CD8-positive, alpha-beta T cell (primary cell): ENCODE measurements at regions of chr13 and their contacts with region 1.

Region 1: DNA sequence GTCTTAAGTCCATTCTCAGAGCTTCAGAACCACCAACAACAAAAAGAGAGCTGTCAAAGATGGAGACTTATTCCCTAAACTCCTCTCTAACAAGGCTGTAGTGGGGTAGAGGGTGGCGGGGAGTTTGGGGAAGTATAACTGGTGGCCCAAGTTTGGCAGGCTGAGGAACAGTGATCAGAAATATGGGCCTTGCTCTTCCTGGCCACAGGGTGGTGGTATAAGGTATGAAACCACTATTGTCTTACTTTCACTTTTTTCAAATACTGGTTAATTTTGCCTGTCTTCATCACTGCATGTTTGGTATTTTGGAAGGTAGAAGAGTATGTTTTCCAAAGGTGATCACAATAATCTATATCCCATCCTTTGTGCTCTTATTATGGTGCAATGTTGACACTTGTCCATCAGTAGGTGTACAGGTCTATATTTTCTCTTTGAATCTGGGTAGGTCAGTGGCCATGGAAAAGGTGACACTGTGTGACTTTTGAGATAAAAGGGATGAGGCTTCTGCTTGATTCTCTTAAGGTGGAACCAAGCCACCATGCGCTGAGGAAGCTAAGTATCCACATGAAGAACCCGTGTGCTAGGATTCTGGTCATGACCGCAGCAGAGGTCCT is 23.2 kb upstream of the GPC5 start:
- DNase-seq: peak in 2 of 9 experiments; percentile 30 to 47
- ATAC-seq: peak; percentile 55
- H3K4me3 ChIP-seq: no peak overlapping the region
- H3K4me3 Mint-ChIP-seq: no peak overlapping the region
- H3K27ac ChIP-seq: no peak overlapping the region
- H3K27ac Mint-ChIP-seq: no peak overlapping the region
- H3K4me1 ChIP-seq: no peaks in the 10 kb centered on the region
- H3K4me1 Mint-ChIP-seq: peaks cover 3% of the 10 kb centered on the region
- H3K27me3 ChIP-seq: no peaks in the 10 kb centered on the region
- H3K27me3 Mint-ChIP-seq: peaks cover 15% of the 10 kb centered on the region
- CTCF ChIP-seq: peak; percentile 36

Region 2: GRCh38 chr13:91347202-91347995 is 27.8 kb before region 1 on chr13 and contains the start of gene MIR17HG:
- CTCF ChIA-PET with region 1: no interaction called
- POLR2A ChIA-PET with region 1: no interaction called
- intact Hi-C with region 1: no loop called
- DNase-seq: peak; percentile 62 to 92 (median 84)
- ATAC-seq: peak; percentile 46
- H3K4me3 ChIP-seq: peak within 1 kb of the TSS; percentile 69 to 86
- H3K4me3 Mint-ChIP-seq: peak within 1 kb of the TSS; percentile 95
- H3K27ac ChIP-seq: peak within 1 kb of the TSS; percentile 60 to 77
- H3K27ac Mint-ChIP-seq: peak within 1 kb of the TSS; percentile 93
- H3K4me1 ChIP-seq: peaks cover 27% of the 10 kb centered on the region
- H3K4me1 Mint-ChIP-seq: peaks cover 41% of the 10 kb centered on the region
- H3K27me3 ChIP-seq: no peaks in the 10 kb centered on the region
- H3K27me3 Mint-ChIP-seq: no peaks in the 10 kb centered on the region
- CTCF ChIP-seq: no peak
- total RNA-seq, gene MIR17HG: 6.4 TPM

Region 3: DNA sequence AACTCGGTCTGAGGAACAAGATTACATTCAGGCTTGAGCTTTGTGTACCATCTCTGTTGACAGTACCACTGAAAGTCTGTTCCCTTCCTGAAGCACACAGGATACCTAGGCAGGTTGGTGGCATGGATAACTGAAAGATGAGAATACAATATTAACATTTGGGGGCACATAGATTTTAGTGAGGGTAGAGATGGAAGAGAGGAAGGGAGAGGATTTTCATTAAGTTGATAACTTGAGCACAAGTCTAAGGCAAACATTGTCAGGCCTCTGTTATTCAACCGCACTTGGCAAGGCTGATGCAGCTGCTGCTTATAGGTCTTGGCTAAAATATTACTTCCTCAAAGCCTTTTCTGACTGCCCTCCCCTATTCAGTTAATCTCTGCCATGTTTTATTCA is 16.8 kb before region 1 on chr13:
- CTCF ChIA-PET with region 1: no interaction called
- POLR2A ChIA-PET with region 1: no interaction called
- intact Hi-C with region 1: loop called in 1 of 2 experiments (anchors 1 kb)
- DNase-seq: no peak
- ATAC-seq: no peak
- H3K4me3 ChIP-seq: no peak overlapping the region
- H3K4me3 Mint-ChIP-seq: no peak overlapping the region
- H3K27ac ChIP-seq: no peak overlapping the region
- H3K27ac Mint-ChIP-seq: peak overlapping the region; percentile 28
- H3K4me1 ChIP-seq: no peaks in the 10 kb centered on the region
- H3K4me1 Mint-ChIP-seq: peaks cover 16% of the 10 kb centered on the region
- H3K27me3 ChIP-seq: no peaks in the 10 kb centered on the region
- H3K27me3 Mint-ChIP-seq: no peaks in the 10 kb centered on the region
- CTCF ChIP-seq: no peak

Region 4: DNA sequence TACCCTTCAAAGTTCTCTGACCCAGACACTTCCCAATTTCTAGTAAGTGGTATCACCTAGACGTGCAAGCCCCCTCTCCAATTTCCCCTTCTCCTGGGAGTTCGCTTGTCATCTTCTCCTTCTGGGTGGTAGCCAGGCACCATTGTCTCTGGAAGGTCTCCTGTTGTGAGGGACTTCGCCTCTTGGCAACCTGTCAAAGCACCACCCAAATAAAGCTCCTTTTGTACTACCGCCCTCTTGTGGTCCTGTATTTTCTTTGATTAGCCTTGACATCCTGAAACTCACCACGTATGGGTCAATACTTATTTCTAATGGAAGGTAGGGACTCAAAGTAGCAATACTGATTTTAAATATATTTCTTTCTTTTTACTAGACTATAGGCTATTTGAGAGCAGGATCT is 31.4 kb after region 1 on chr13:
- CTCF ChIA-PET with region 1: no interaction called
- POLR2A ChIA-PET with region 1: no interaction called
- intact Hi-C with region 1: loop called in 1 of 2 experiments (anchors 2 kb)
- DNase-seq: peak in 3 of 9 experiments; percentile 16 to 62 (median 53)
- ATAC-seq: peak; percentile 14
- H3K4me3 ChIP-seq: no peak overlapping the region
- H3K4me3 Mint-ChIP-seq: no peak overlapping the region
- H3K27ac ChIP-seq: no peak overlapping the region
- H3K27ac Mint-ChIP-seq: no peak overlapping the region
- H3K4me1 ChIP-seq: no peaks in the 10 kb centered on the region
- H3K4me1 Mint-ChIP-seq: no peaks in the 10 kb centered on the region
- H3K27me3 ChIP-seq: no peaks in the 10 kb centered on the region
- H3K27me3 Mint-ChIP-seq: peaks cover 17% of the 10 kb centered on the region
- CTCF ChIP-seq: no peak

Region 5: GRCh38 chr13:91468301-91468700 is 93.1 kb after region 1 on chr13:
- CTCF ChIA-PET with region 1: no interaction called
- POLR2A ChIA-PET with region 1: no interaction called
- intact Hi-C with region 1: no loop called
- DNase-seq: no peak
- ATAC-seq: no peak
- H3K4me3 ChIP-seq: no peak overlapping the region
- H3K4me3 Mint-ChIP-seq: no peak overlapping the region
- H3K27ac ChIP-seq: no peak overlapping the region
- H3K27ac Mint-ChIP-seq: no peak overlapping the region
- H3K4me1 ChIP-seq: no peaks in the 10 kb centered on the region
- H3K4me1 Mint-ChIP-seq: no peaks in the 10 kb centered on the region
- H3K27me3 ChIP-seq: no peaks in the 10 kb centered on the region
- H3K27me3 Mint-ChIP-seq: peaks cover 3% of the 10 kb centered on the region
- CTCF ChIP-seq: no peak

Region 6: GRCh38 chr13:91722267-91722884 is 347.2 kb after region 1 on chr13:
- CTCF ChIA-PET with region 1: interaction called, 3 read pairs
- POLR2A ChIA-PET with region 1: no interaction called
- intact Hi-C with region 1: loop called (anchors 1 kb)
- DNase-seq: peak in 2 of 9 experiments; percentile 17 to 24
- ATAC-seq: no peak
- H3K4me3 ChIP-seq: no peak overlapping the region
- H3K4me3 Mint-ChIP-seq: no peak overlapping the region
- H3K27ac ChIP-seq: no peak overlapping the region
- H3K27ac Mint-ChIP-seq: no peak overlapping the region
- H3K4me1 ChIP-seq: no peaks in the 10 kb centered on the region
- H3K4me1 Mint-ChIP-seq: no peaks in the 10 kb centered on the region
- H3K27me3 ChIP-seq: no peaks in the 10 kb centered on the region
- H3K27me3 Mint-ChIP-seq: no peaks in the 10 kb centered on the region
- CTCF ChIP-seq: peak; percentile 60